ENCODE measurements at regions of chr21 and their contacts with region 1.

Region 1: DNA sequence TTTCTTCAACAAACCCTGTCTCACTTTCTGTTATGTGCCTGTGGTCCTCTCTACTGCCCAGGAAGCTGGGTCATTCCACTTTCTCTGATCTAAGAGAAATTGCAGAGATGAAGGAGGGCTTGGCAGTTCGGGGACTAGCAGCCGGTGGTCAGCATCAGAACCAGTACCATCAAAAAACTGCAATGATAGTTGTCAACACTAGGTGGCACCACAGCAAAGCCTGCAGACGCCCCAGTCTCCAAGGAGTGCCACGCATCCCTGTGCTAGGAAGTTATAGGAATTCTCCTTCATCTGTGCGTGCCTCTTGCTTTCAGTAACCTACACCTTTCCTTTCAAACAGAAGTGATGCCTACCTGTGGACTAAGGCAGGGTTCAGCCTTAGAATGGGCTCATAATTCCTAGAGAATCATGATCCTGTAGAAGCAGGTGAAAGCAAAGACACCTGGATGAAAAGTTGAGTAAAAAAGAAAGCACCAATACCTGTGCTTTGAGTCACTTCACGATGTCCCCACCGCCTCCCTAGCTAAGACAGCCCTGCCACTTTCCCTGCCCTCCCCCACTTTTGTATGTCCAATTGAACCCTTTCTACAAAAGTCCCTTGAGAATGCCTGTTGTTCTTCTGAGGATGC is 129.2 kb downstream of the ADAMTS1 start:
- DNase-seq: peak in 1 of 2 experiments; percentile 79
- H3K4me3 ChIP-seq: no peak overlapping the region
- H3K27ac ChIP-seq: no peak overlapping the region
- H3K4me1 ChIP-seq: peaks cover 0 to under 1% (median 0%) of the 10 kb centered on the region in 4 experiments; a peak in 4 of 7 replicates
- H3K27me3 ChIP-seq: no peaks in the 10 kb centered on the region
- CTCF ChIP-seq: peak; percentile 75 to 88 (median 77)
- EP300 ChIP-seq: no peak
- POLR2A ChIP-seq: no peak
- RAD21 ChIP-seq: peak; percentile 71 to 74

Region 2: GRCh38 chr21:26522704-26523103 is 193.3 kb before region 1 on chr21:
- CTCF ChIA-PET with region 1: no interaction called
- POLR2A ChIA-PET with region 1: no interaction called
- DNase-seq: no peak
- H3K4me3 ChIP-seq: no peak overlapping the region
- H3K27ac ChIP-seq: no peak overlapping the region
- H3K4me1 ChIP-seq: no peaks in the 10 kb centered on the region; a peak in 1 of 7 replicates
- H3K27me3 ChIP-seq: no peaks in the 10 kb centered on the region
- CTCF ChIP-seq: no peak
- EP300 ChIP-seq: no peak
- POLR2A ChIP-seq: no peak
- RAD21 ChIP-seq: no peak

Region 3: DNA sequence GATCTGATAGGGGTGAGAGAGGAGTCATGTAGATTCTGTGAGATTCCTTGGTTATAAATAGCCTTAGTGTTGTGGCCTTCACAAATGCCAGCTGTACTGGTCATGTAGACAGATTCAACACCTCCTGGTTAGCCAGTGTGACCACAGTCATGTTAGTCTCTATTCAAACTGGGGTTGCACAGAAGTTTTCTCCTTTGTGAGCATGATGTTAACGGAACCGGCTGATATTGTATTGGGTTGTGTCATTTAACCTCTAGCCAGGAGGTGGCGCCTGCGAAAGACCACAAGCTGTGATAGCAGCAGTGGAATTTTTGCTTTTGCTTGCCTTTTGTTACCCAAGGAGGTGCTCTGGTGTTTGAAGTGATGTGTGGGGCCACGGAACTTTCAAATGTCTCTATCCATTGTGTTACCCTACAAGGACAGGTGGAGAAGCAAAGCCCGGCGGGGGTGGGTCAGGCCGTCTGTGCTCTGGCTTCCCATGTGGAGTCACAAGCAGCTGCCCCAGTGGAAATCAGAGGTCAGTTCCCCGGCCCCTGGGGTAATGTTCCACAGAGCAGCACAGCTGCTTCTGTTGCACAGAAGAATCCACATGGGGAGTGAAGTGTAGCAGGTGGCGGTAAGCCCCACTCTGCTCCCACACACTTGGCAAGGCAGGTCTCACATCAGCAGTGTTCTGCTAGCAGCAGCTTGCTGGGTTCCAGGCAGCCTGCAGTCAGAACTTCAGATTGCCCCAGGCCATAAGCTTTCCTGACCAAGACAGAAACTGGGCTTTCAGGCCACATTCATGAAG is 16.6 kb after region 1 on chr21:
- CTCF ChIA-PET with region 1: interaction called, 17 read pairs
- POLR2A ChIA-PET with region 1: interaction called, 4 read pairs
- DNase-seq: peak; percentile 34 to 80
- H3K4me3 ChIP-seq: no peak overlapping the region
- H3K27ac ChIP-seq: no peak overlapping the region; the same call in 1 of the 2 replicates
- H3K4me1 ChIP-seq: peaks cover 0 to 8% (median 4%) of the 10 kb centered on the region in 4 experiments; a peak in 6 of 7 replicates
- H3K27me3 ChIP-seq: no peaks in the 10 kb centered on the region; a peak in 2 of 7 replicates
- CTCF ChIP-seq: peak; percentile 51 to 85 (median 64)
- EP300 ChIP-seq: no peak; a peak in 1 of 3 replicates
- POLR2A ChIP-seq: no peak
- RAD21 ChIP-seq: peak; percentile 36 to 53; a peak in 3 of 4 replicates